Endothelial cell of umbilical vein (primary cell): ENCODE measurements at regions of chr7 and their contacts with region 1.

Region 1: GRCh38 chr7:132318352-132319318 is 257.6 kb downstream of the PLXNA4 start:
- DNase-seq: peak; percentile 91
- H3K4me3 ChIP-seq: no peak overlapping the region
- H3K27ac ChIP-seq: no peak overlapping the region
- H3K4me1 ChIP-seq: peaks cover 22% of the 10 kb centered on the region
- H3K27me3 ChIP-seq: no peaks in the 10 kb centered on the region
- CTCF ChIP-seq: peak; percentile 84 to 89
- POLR2A ChIP-seq: no peak

Region 2: GRCh38 chr7:131931370-131931769 is 387.3 kb before region 1 on chr7:
- CTCF ChIA-PET with region 1: no interaction called
- POLR2A ChIA-PET with region 1: no interaction called
- dilution Hi-C with region 1: no loop called
- intact Hi-C with region 1: no loop called
- DNase-seq: no peak
- H3K4me3 ChIP-seq: no peak overlapping the region
- H3K27ac ChIP-seq: no peak overlapping the region
- H3K4me1 ChIP-seq: no peaks in the 10 kb centered on the region
- H3K27me3 ChIP-seq: peaks cover 4 to 8% of the 10 kb centered on the region in 2 experiments
- CTCF ChIP-seq: no peak
- POLR2A ChIP-seq: no peak

Region 3: GRCh38 chr7:132292803-132293202 is 25.8 kb before region 1 on chr7:
- CTCF ChIA-PET with region 1: interaction called, 14 read pairs
- POLR2A ChIA-PET with region 1: no interaction called
- dilution Hi-C with region 1: no loop called
- intact Hi-C with region 1: no loop called
- DNase-seq: peak; percentile 84
- H3K4me3 ChIP-seq: no peak overlapping the region
- H3K27ac ChIP-seq: peak overlapping the region; percentile 64
- H3K4me1 ChIP-seq: peaks cover 54% of the 10 kb centered on the region
- H3K27me3 ChIP-seq: no peaks in the 10 kb centered on the region
- CTCF ChIP-seq: no peak
- POLR2A ChIP-seq: no peak

Region 4: DNA sequence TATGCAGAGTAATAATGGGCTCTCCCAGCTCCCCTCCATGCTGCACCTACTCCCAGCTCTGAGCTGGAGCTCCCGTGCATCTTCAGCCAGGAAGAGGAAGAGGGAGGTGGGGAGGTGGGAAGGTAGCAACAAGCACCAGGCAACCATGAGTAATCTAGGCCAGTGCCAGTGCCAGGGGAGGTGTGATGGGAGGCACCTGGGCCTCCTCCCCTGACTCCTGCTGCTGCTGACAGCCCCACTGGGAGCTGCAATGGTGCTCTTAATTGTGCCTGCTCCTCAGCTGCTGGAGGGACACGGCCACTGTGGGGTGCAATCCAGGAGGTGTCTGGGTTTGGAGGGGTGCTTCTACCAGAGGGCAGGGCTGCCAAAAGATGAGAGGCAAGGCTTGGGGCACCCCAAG is 14.7 kb after region 1 on chr7:
- CTCF ChIA-PET with region 1: interaction called, 10 read pairs
- POLR2A ChIA-PET with region 1: no interaction called
- dilution Hi-C with region 1: no loop called
- intact Hi-C with region 1: no loop called
- DNase-seq: no peak
- H3K4me3 ChIP-seq: no peak overlapping the region
- H3K27ac ChIP-seq: no peak overlapping the region
- H3K4me1 ChIP-seq: peaks cover 4% of the 10 kb centered on the region
- H3K27me3 ChIP-seq: no peaks in the 10 kb centered on the region
- CTCF ChIP-seq: no peak
- POLR2A ChIP-seq: no peak

Region 5: GRCh38 chr7:132407764-132408163 is 89.1 kb after region 1 on chr7:
- CTCF ChIA-PET with region 1: interaction called, 3 read pairs
- POLR2A ChIA-PET with region 1: no interaction called
- dilution Hi-C with region 1: no loop called
- intact Hi-C with region 1: loop called (anchors 5 kb)
- DNase-seq: peak; percentile 87
- H3K4me3 ChIP-seq: no peak overlapping the region
- H3K27ac ChIP-seq: peak overlapping the region; percentile 26
- H3K4me1 ChIP-seq: peaks cover 32% of the 10 kb centered on the region
- H3K27me3 ChIP-seq: no peaks in the 10 kb centered on the region
- CTCF ChIP-seq: no peak
- POLR2A ChIP-seq: no peak

Region 6: DNA sequence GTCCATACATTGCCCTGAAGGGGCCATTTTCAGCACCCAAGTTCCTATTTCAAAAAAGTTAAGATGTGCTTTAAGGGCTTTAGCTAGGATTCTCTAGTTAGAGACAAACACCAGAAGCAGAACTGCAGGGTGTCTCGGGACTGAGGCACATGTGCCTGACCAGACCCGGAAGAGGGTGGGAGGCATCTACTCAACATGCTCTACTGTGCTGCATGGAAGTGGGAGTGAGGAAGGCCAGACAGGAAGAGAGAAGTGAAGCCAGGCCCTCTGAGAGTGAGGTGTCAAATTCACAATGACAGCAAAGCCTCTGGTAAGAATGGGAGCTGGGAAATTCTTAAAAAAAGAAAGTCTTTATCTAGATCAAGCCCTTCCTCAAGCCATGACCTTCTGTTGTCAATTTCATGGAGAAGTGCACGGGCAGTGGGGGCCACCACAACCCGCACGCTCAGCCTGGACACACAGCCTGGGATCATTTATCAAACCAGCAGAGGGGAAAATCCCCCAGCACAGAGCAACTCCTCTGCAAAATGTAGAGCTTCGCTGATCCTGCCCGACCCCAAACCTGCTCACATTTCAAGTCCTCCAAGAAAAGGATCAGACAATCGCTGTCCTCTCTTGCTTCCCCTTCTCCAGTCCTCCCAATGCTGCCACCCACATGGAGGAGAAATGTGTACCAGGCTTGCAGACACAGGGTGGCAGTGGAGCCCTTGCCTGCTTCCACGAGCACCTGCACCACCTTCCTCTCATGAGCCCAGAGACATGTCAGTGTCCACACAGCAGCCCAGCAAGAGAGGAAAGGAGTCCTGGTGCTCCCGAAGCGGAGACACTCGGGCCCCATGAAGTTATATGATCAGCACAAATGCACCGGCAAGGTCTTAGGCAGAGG is 219.1 kb after region 1 on chr7:
- CTCF ChIA-PET with region 1: interaction called, 12 read pairs
- POLR2A ChIA-PET with region 1: no interaction called
- dilution Hi-C with region 1: no loop called
- intact Hi-C with region 1: no loop called
- DNase-seq: peak; percentile 11
- H3K4me3 ChIP-seq: no peak overlapping the region
- H3K27ac ChIP-seq: no peak overlapping the region
- H3K4me1 ChIP-seq: peaks cover 11% of the 10 kb centered on the region
- H3K27me3 ChIP-seq: no peaks in the 10 kb centered on the region
- CTCF ChIP-seq: no peak
- POLR2A ChIP-seq: no peak

Region 7: DNA sequence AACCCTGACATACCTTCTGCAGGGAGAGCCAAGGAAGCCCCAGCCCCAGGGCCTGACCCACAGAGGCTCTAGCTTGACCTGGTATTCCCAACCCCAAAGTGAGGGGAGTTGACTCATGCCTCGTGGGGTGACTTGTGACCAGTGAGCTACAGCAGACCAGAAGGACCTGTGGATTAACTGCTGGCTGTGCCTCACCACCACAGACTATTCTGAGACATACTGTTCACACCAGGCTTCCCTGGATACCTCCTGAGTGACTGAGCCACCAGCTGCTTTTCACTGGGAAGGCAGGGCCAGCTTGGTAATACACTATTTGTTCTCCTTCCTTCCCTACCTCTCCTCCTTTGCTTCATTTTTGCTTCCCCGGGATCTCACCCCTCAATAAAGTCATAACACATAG is 250.3 kb after region 1 on chr7:
- CTCF ChIA-PET with region 1: interaction called, 268 read pairs
- POLR2A ChIA-PET with region 1: no interaction called
- dilution Hi-C with region 1: no loop called
- intact Hi-C with region 1: no loop called
- DNase-seq: no peak
- H3K4me3 ChIP-seq: no peak overlapping the region
- H3K27ac ChIP-seq: no peak overlapping the region
- H3K4me1 ChIP-seq: peaks cover 39% of the 10 kb centered on the region
- H3K27me3 ChIP-seq: no peaks in the 10 kb centered on the region
- CTCF ChIP-seq: no peak
- POLR2A ChIP-seq: no peak

Region 8: GRCh38 chr7:132815696-132816311 is 497.2 kb after region 1 on chr7:
- CTCF ChIA-PET with region 1: no interaction called
- POLR2A ChIA-PET with region 1: no interaction called
- dilution Hi-C with region 1: no loop called
- intact Hi-C with region 1: no loop called
- DNase-seq: peak; percentile 49
- H3K4me3 ChIP-seq: no peak overlapping the region
- H3K27ac ChIP-seq: no peak overlapping the region
- H3K4me1 ChIP-seq: no peaks in the 10 kb centered on the region
- H3K27me3 ChIP-seq: no peaks in the 10 kb centered on the region
- CTCF ChIP-seq: no peak
- POLR2A ChIP-seq: no peak